Activated CD4-positive, alpha-beta T cell treated with anti-CD3 and anti-CD28 coated beads, Interleukin-2, amount 10 ng/mL, durations not matched to agents 7 days and 5 days (primary cell): ENCODE measurements at regions of chr14 and their contacts with region 1.

Region 1: DNA sequence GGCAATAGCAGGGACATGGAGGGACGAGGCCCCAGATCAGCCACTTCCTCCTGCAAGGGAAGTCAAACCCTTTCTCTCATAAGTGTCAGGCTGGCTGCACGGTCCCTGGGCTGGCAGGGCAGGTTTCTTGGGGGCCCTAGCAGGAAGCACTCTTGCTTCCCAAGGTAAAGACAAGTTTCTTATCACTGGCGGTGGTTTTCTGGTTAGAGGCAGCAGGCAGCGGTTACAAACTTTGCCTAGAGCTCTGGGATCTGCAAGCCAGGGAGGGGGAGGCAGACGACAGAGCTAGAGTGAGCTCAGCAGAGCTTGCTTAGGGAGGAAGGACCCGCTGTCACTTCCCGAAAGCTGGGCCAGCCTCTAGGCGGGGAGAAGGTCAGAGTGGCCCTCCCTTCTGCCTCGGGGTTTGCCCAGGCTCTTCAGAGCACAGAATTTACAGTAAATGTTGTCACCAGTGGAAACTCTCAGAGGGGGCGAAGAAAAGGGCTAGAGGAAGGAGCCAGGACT is 20.4 kb downstream of the BATF start:
- DNase-seq: peak; percentile 73
- H3K4me3 Mint-ChIP-seq: peak overlapping the region; percentile 58
- H3K27ac Mint-ChIP-seq: peak overlapping the region; percentile 95
- H3K4me1 Mint-ChIP-seq: peaks cover 71% of the 10 kb centered on the region
- H3K27me3 Mint-ChIP-seq: no peaks in the 10 kb centered on the region

Region 2: DNA sequence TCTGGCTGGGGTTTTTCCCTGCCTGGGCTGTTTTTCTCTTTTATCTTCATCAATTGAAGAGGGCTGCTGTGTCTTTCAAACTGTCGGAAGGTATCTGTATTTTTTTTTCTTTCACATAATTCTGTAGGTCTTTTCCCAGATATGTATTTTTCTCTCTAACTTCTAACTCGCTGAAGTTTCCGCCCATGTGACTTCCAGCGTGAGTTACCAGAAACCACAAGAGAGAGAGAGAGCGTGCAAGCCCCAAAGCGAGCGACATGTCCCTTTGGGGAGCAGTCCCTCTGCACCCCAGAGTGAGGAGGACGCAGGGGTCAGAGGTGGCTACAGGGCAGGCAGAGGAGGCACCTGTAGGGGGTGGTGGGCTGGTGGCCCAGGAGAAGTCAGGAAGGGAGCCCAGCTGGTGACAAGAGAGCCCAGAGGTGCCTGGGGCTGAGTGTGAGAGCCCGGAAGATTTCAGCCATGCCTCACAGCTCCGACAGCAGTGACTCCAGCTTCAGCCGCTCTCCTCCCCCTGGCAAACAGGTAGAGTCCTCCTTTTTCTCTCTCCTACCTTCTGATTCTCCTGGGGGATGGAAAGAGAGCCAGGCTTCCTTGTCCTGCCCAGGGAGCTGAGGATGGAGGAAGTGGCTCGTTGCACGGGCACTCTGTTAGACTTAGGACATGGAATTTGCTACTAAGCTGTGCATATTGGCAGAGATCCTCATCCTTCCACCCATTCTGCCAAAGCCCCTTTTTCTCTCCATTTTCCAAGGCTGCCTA is 20.2 kb before region 1 on chr14 and contains the start of gene BATF:
- CTCF ChIA-PET with region 1: interaction called, 101 read pairs
- POLR2A ChIA-PET with region 1: no interaction called
- DNase-seq: peak; percentile 88
- H3K4me3 Mint-ChIP-seq: peak within 1 kb of the TSS; percentile 93
- H3K27ac Mint-ChIP-seq: peak within 1 kb of the TSS; percentile 96
- H3K4me1 Mint-ChIP-seq: peaks cover 78% of the 10 kb centered on the region
- H3K27me3 Mint-ChIP-seq: no peaks in the 10 kb centered on the region
- total RNA-seq, gene BATF: 39.4 to 41.0 TPM

Region 3: DNA sequence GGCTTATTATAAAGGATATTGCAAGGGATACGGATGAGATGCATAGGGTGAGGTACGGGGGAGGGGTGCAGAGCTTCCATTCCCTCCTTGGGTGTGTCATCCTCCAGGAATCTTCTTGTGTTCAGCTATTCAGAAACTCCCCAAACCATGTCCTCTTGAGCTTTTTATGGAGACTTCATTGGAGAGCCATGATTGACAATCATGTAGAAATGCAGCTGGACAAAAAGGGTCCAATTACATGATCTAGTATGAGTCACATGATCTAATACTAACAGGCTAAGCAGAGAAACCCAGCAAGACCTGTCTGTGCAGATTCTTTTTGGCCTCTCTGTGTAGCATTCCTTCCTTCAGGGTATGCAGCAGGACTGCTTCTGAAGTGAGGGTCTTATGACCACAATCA is 11.8 kb after region 1 on chr14:
- CTCF ChIA-PET with region 1: interaction called, 17 read pairs
- POLR2A ChIA-PET with region 1: no interaction called
- DNase-seq: no peak
- H3K4me3 Mint-ChIP-seq: no peak overlapping the region
- H3K27ac Mint-ChIP-seq: no peak overlapping the region
- H3K4me1 Mint-ChIP-seq: peaks cover 23% of the 10 kb centered on the region
- H3K27me3 Mint-ChIP-seq: no peaks in the 10 kb centered on the region

Region 4: DNA sequence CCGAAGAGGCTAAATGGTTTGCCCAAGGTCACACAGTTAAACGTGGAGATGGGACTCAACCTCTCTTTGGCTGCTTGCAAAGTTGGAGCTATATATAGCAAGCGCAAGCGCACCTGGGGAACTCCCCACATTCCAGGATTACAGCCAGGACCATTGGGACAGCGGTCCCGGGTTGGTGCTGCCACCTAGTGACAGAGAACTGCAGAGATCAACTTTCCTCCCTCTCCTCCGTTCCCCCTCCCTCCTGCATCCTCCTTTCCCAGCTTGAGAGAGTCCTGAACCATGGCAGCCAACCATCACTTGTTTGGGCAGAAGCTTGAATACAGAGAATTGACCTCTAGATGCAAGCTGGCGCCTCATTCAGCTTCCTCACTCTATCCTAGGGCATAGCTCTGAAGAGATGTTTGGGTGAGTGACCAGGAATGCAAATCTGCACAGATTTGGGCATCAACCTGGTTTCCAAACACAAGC is 18.4 kb after region 1 on chr14:
- CTCF ChIA-PET with region 1: interaction called, 13 read pairs
- POLR2A ChIA-PET with region 1: interaction called, 3 read pairs
- DNase-seq: peak; percentile 45
- H3K4me3 Mint-ChIP-seq: peak overlapping the region; percentile 2
- H3K27ac Mint-ChIP-seq: no peak overlapping the region
- H3K4me1 Mint-ChIP-seq: peaks cover 62% of the 10 kb centered on the region
- H3K27me3 Mint-ChIP-seq: no peaks in the 10 kb centered on the region